Heart right ventricle (tissue), 16 donors: ENCODE measurements at regions of chr10 and their contacts with region 1.

Region 1: GRCh38 chr10:53403688-53404087 is 631.1 kb upstream of the MBL2 start:
- DNase-seq: peak; percentile 76 to 81
- ATAC-seq: peak; percentile 97 to 100 (median 100)
- H3K4me3 ChIP-seq: no peak overlapping the region
- H3K27ac ChIP-seq: no peak overlapping the region
- H3K4me1 ChIP-seq: peaks cover 0 to 13% (median 5%) of the 10 kb centered on the region in 9 donors
- H3K27me3 ChIP-seq: no peaks in the 10 kb centered on the region
- CTCF ChIP-seq: no peak

Region 2: GRCh38 chr10:53379956-53380355 is 23.7 kb before region 1 on chr10:
- intact Hi-C with region 1: loop called in 1 of 10 experiments (anchors 2 kb)
- DNase-seq: no peak
- ATAC-seq: no peak
- H3K4me3 ChIP-seq: no peak overlapping the region
- H3K27ac ChIP-seq: no peak overlapping the region
- H3K4me1 ChIP-seq: no peaks in the 10 kb centered on the region
- H3K27me3 ChIP-seq: no peaks in the 10 kb centered on the region
- CTCF ChIP-seq: no peak

Region 3: GRCh38 chr10:53508197-53508596 is 104.5 kb after region 1 on chr10:
- intact Hi-C with region 1: no loop called
- DNase-seq: no peak
- ATAC-seq: no peak
- H3K4me3 ChIP-seq: no peak overlapping the region
- H3K27ac ChIP-seq: no peak overlapping the region
- H3K4me1 ChIP-seq: no peaks in the 10 kb centered on the region
- H3K27me3 ChIP-seq: no peaks in the 10 kb centered on the region
- CTCF ChIP-seq: no peak

Region 4: GRCh38 chr10:53521046-53521445 is 117.4 kb after region 1 on chr10:
- intact Hi-C with region 1: no loop called
- DNase-seq: no peak
- ATAC-seq: no peak
- H3K4me3 ChIP-seq: no peak overlapping the region
- H3K27ac ChIP-seq: no peak overlapping the region
- H3K4me1 ChIP-seq: no peaks in the 10 kb centered on the region
- H3K27me3 ChIP-seq: no peaks in the 10 kb centered on the region
- CTCF ChIP-seq: no peak